ENCODE measurements at regions of chr9 and their contacts with region 1.

Region 1: GRCh38 chr9:110256380-110257096 is at the start of gene TXN:
- DNase-seq: peak; percentile 85
- H3K4me3 Mint-ChIP-seq: peak within 1 kb of the TSS; percentile 98
- H3K27ac Mint-ChIP-seq: peak within 1 kb of the TSS; percentile 100
- H3K4me1 Mint-ChIP-seq: peaks cover 59% of the 10 kb centered on the region
- H3K27me3 Mint-ChIP-seq: peaks cover 10% of the 10 kb centered on the region
- total RNA-seq, gene TXN: 412 and 422 TPM in 2 replicates

Region 2: DNA sequence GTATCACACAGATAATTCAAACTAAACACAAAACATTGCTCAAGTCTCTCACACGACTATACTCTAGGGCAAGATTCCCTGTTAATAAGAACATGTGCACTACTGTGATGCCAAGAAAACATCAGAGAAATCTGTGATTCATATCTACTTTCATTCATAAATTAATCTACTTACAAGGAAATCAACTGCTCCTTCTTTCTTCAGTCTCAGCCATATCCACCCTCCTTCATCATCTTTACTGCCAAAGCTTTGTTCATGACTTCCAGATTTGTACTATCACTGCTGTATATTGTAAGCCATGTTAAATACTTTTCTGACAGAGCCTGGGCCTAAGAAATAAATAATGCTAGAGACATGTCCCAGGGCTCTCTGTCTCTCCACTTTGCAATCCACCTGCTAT is 1278.3 kb before region 1 on chr9:
- intact Hi-C with region 1: no loop called
- DNase-seq: no peak
- H3K4me3 Mint-ChIP-seq: no peak overlapping the region
- H3K27ac Mint-ChIP-seq: no peak overlapping the region
- H3K4me1 Mint-ChIP-seq: peaks cover 8% of the 10 kb centered on the region
- H3K27me3 Mint-ChIP-seq: no peaks in the 10 kb centered on the region

Region 3: GRCh38 chr9:109119439-109120203 is 1136.9 kb before region 1 on chr9 and contains the start of gene TMEM245:
- intact Hi-C with region 1: loop called (anchors 10 kb)
- DNase-seq: peak; percentile 91
- H3K4me3 Mint-ChIP-seq: peak within 1 kb of the TSS; percentile 95
- H3K27ac Mint-ChIP-seq: peak within 1 kb of the TSS; percentile 87
- H3K4me1 Mint-ChIP-seq: peaks cover 33% of the 10 kb centered on the region
- H3K27me3 Mint-ChIP-seq: no peaks in the 10 kb centered on the region
- total RNA-seq, gene TMEM245: 26.9 and 29.4 TPM in 2 replicates

Region 4: GRCh38 chr9:109894921-109895758 is 361.4 kb before region 1 on chr9:
- intact Hi-C with region 1: loop called (anchors 2 kb)
- DNase-seq: peak; percentile 58
- H3K4me3 Mint-ChIP-seq: peak overlapping the region; percentile 56
- H3K27ac Mint-ChIP-seq: peak overlapping the region; percentile 94
- H3K4me1 Mint-ChIP-seq: peaks cover 74% of the 10 kb centered on the region
- H3K27me3 Mint-ChIP-seq: no peaks in the 10 kb centered on the region

Region 5: DNA sequence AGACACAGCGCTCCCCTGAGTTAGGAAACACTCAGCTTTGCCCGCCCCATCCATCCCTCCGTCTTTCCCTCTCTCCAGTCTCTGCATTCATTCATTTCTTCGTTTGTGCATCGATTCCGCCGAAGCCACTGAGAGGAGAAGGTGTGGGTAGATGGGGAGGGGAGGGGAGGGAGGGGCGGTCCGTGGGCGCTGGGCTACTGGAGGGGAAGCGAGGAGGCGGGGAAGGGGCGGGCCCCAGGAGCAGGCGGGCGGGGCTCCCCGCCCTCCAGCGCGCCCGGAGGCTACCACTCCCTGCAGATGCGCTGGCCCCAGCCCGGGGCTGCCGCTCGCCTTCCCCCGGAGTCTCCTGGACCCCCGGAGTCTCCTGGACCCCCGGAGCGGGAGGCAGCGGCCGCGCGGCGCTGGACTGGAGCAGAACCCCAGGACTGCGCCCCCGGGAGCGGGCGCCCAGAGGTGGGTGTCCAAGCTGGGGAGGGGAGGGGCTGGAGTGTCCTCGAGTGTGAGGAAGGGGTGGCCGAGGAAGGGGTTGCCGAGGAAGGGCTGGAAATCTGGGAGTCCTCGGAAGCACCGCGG is 208.0 kb before region 1 on chr9:
- intact Hi-C with region 1: loop called (anchors 2 kb)
- DNase-seq: peak; percentile 81
- H3K4me3 Mint-ChIP-seq: peak overlapping the region; percentile 93
- H3K27ac Mint-ChIP-seq: peak overlapping the region; percentile 89
- H3K4me1 Mint-ChIP-seq: peaks cover 58% of the 10 kb centered on the region
- H3K27me3 Mint-ChIP-seq: no peaks in the 10 kb centered on the region

Region 6: DNA sequence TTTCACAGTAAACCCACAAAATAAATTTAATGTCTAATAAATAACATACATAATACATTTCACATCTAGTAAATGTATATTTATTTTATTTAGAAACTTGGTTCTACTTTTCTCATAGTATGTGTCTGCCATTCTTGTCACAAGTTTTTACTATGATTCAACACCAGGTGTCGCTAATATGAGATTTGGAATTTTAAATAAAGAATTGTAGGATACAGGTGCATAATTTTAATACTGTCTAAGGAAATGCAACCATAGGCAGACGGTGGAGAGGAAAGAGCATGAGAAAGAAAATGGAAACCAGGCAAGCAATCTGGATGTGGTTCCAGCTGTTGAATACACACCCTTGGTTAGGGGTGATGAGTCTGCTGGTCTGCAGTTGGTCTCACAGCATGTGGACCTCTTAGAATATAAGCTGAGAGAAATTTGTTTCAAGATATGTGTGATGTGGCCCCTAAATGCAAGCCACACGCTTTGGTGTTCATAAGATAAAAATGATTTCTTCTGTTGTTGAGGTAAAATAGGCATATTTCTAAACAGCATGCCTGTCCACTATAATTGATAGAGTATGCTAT is 195.8 kb after region 1 on chr9:
- intact Hi-C with region 1: no loop called
- DNase-seq: no peak
- H3K4me3 Mint-ChIP-seq: no peak overlapping the region
- H3K27ac Mint-ChIP-seq: no peak overlapping the region
- H3K4me1 Mint-ChIP-seq: no peaks in the 10 kb centered on the region
- H3K27me3 Mint-ChIP-seq: no peaks in the 10 kb centered on the region

Region 7: GRCh38 chr9:111631071-111631971 is 1374.8 kb after region 1 on chr9 and contains the start of gene DNAJC25:
- intact Hi-C with region 1: loop called (anchors 5 kb)
- DNase-seq: peak; percentile 97
- H3K4me3 Mint-ChIP-seq: peak within 1 kb of the TSS; percentile 98
- H3K27ac Mint-ChIP-seq: peak within 1 kb of the TSS; percentile 93
- H3K4me1 Mint-ChIP-seq: peaks cover 54% of the 10 kb centered on the region
- H3K27me3 Mint-ChIP-seq: peaks cover 3% of the 10 kb centered on the region
- total RNA-seq, gene DNAJC25: 5.8 and 6.1 TPM in 2 replicates

Measured in activated T-helper 1 cell treated with anti-CD3 and anti-CD28 coated beads, Interleukin-12 subunit alpha, Interleukin-12 subunit beta, Interleukin-2, Interleukin-4 antibody, amounts not matched to agents 30 ng/mL and 10 ng/mL and 1 ng/mL, durations not matched to agents 14 hours and 24 hours and 36 hours (primary cell).